Activated CD4-positive, alpha-beta T cell treated with anti-CD3 and anti-CD28 coated beads for 36 hours (primary cell): ENCODE measurements at regions of chr3 and their contacts with region 1.

Region 1: DNA sequence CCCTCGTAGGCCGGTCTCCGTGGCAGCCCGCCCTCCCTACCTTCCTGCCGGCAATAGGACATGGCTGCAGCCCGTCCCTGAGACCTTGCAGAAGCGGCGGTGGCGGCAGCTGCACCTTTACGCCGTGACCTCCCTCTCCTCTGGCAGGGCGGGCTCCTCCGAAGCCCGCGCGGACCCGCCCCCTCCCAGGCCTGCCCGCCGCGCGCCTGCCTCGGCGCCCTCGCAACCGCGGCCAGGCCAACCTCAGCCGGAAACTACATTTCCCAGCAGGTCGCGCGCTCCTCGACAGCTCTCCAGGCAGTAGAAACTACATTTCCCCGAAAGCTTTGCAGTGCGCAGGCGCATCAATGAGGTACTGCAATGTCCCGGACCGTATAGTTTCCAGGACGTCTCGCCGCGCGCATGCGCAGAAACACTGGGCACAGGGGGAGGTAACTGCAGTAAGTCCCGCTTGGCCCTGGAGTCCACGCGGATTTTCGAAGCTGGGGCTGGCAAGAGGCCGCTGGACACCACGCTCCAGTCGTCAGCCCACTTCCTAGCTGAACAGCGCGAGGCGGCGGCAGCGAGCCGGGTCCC is at the starts of genes CHCHD4 and TMEM43:
- DNase-seq: peak; percentile 99
- ATAC-seq: peak; percentile 91
- H3K4me3 Mint-ChIP-seq: peak within 1 kb of the TSS; percentile 96
- H3K27ac Mint-ChIP-seq: peak within 1 kb of the TSS; percentile 90
- H3K4me1 Mint-ChIP-seq: peaks cover 64% of the 10 kb centered on the region
- H3K27me3 Mint-ChIP-seq: no peaks in the 10 kb centered on the region
- total RNA-seq, gene CHCHD4: 23.3 TPM
- total RNA-seq, gene TMEM43: 28.3 to 28.5 TPM

Region 2: GRCh38 chr3:13012228-13012691 is 1112.4 kb before region 1 on chr3:
- CTCF ChIA-PET with region 1: no interaction called
- POLR2A ChIA-PET with region 1: no interaction called
- intact Hi-C with region 1: loop called in 1 of 2 experiments (anchors 5 kb)
- DNase-seq: peak; percentile 86
- ATAC-seq: peak; percentile 57
- H3K4me3 Mint-ChIP-seq: peak overlapping the region; percentile 72
- H3K27ac Mint-ChIP-seq: peak overlapping the region; percentile 98
- H3K4me1 Mint-ChIP-seq: peaks cover 85% of the 10 kb centered on the region
- H3K27me3 Mint-ChIP-seq: no peaks in the 10 kb centered on the region

Region 3: DNA sequence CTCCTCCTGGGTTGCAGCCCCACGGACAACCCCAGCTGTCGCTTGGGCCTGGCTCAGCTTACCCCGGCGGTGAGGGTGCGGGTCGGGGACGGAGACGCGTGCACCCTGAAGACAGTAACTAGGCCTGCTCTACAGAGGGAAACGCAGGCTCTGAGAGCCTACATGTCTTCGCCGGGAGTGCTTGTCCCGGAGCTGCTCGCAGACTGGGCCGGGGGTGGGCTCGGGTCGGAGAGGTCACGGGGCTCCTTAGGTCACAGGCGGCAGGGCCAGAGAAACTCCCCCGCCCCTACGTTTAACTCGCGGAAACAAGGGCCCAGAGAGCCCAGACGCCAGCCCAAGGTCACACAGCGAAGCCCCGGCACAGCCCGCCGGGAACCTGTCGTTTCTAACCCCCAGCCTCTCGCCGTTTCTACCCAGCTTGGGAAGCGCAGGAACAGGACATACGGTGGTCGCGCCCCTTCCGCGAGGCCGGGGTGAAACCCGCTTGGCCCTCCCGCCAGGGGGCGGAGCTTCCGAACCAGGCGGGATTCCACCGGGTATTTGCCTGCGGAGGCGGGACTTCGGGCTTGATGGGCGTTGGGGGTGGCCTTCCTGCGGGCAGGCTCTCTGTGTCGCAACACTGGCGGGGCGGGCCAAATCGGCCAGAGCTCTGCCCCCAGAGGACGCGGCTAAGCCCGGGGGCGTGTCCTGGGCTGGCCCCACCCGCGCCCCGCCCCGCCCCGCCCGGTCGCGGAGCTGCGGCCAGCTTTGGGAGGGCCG is 644.9 kb before region 1 on chr3 and contains the start of gene HDAC11:
- CTCF ChIA-PET with region 1: no interaction called
- POLR2A ChIA-PET with region 1: interaction called, 4 read pairs
- intact Hi-C with region 1: loop called in 1 of 2 experiments (anchors 5 kb)
- DNase-seq: peak; percentile 99
- ATAC-seq: peak; percentile 96
- H3K4me3 Mint-ChIP-seq: peak within 1 kb of the TSS; percentile 89
- H3K27ac Mint-ChIP-seq: peak within 1 kb of the TSS; percentile 90
- H3K4me1 Mint-ChIP-seq: peaks cover 20% of the 10 kb centered on the region
- H3K27me3 Mint-ChIP-seq: no peaks in the 10 kb centered on the region
- total RNA-seq, gene HDAC11: 3.4 to 4.1 TPM

Region 4: GRCh38 chr3:13895155-13896105 is 229.3 kb before region 1 on chr3:
- CTCF ChIA-PET with region 1: interaction called, 9 read pairs
- POLR2A ChIA-PET with region 1: interaction called, 3 read pairs
- intact Hi-C with region 1: loop called (anchors 1 kb)
- DNase-seq: peak; percentile 99
- ATAC-seq: peak; percentile 100
- H3K4me3 Mint-ChIP-seq: peak overlapping the region; percentile 83
- H3K27ac Mint-ChIP-seq: peak overlapping the region; percentile 82
- H3K4me1 Mint-ChIP-seq: peaks cover 19% of the 10 kb centered on the region
- H3K27me3 Mint-ChIP-seq: no peaks in the 10 kb centered on the region

Region 5: GRCh38 chr3:14144423-14145075 is 19.8 kb after region 1 on chr3:
- CTCF ChIA-PET with region 1: interaction called, 6 read pairs
- POLR2A ChIA-PET with region 1: interaction called, 9 read pairs
- intact Hi-C with region 1: loop called (anchors 1 kb)
- DNase-seq: peak; percentile 71
- ATAC-seq: peak; percentile 85
- H3K4me3 Mint-ChIP-seq: no peak overlapping the region
- H3K27ac Mint-ChIP-seq: peak overlapping the region; percentile 86
- H3K4me1 Mint-ChIP-seq: peaks cover 56% of the 10 kb centered on the region
- H3K27me3 Mint-ChIP-seq: no peaks in the 10 kb centered on the region

Region 6: DNA sequence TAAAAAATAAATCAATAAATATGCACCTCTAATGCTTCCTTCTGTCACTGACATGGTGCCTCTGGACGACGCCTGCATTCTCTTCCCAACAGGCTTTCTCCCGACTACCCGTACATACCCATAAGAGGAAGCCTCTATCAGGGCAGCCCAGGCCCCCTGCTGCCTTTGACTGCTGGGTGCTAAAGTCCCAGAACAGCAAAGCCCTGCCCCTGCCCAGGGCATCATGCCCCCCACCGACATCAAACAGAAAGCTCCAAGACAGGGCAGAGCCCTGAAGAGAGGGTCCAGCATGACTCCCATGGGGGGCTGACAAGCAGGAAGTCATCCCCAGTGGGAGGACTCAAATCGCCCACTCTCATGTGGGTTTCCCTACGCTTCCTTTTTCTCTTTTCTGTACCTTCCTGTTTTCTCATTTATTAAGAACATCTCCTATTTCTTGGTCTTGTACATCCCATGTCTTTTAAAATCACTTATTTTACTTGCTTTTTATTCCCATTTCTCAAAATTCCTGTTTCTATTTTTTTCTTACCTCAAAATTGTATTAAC is 30.3 kb after region 1 on chr3:
- CTCF ChIA-PET with region 1: no interaction called
- POLR2A ChIA-PET with region 1: no interaction called
- intact Hi-C with region 1: no loop called
- DNase-seq: no peak
- ATAC-seq: no peak
- H3K4me3 Mint-ChIP-seq: no peak overlapping the region
- H3K27ac Mint-ChIP-seq: no peak overlapping the region
- H3K4me1 Mint-ChIP-seq: peaks cover 4% of the 10 kb centered on the region
- H3K27me3 Mint-ChIP-seq: no peaks in the 10 kb centered on the region

Region 7: DNA sequence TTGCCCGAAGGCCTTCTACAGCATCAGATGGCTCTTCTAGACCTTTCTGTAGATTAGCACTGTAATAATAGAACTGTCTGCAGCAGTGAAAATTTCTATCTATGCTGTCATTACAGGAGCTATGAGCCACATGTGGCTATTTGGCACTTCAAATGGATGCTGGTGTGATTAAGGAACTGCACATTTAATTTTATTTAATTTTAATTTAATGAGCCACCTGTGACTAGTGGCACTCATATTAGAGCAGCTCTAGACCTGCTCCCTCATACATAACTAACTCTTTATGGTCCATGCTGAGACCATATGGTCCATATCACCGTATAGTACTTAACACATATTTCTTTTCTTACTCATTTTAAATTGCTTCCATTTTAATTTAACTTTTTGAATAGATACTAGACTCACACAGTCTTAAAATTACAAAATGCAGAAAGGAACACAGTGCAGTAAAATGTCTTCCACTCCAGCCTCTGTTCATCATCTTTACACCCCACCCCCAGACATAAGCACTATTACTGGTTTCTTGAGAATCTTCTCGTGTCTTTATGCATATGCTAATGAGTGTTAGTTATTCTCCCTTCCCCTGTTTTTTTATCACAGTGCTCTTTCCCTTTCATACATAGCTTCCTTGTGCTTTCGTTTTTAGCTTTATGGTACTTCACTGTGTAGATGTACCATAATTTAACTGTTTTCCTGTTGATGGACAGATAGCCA is 63.5 kb after region 1 on chr3:
- CTCF ChIA-PET with region 1: no interaction called
- POLR2A ChIA-PET with region 1: no interaction called
- intact Hi-C with region 1: no loop called
- DNase-seq: no peak
- ATAC-seq: peak; percentile 89
- H3K4me3 Mint-ChIP-seq: no peak overlapping the region
- H3K27ac Mint-ChIP-seq: no peak overlapping the region
- H3K4me1 Mint-ChIP-seq: peaks cover 60% of the 10 kb centered on the region
- H3K27me3 Mint-ChIP-seq: no peaks in the 10 kb centered on the region

Region 8: GRCh38 chr3:14329116-14329830 is 204.6 kb after region 1 on chr3:
- CTCF ChIA-PET with region 1: no interaction called
- POLR2A ChIA-PET with region 1: no interaction called
- intact Hi-C with region 1: no loop called
- DNase-seq: no peak
- ATAC-seq: no peak
- H3K4me3 Mint-ChIP-seq: no peak overlapping the region
- H3K27ac Mint-ChIP-seq: no peak overlapping the region
- H3K4me1 Mint-ChIP-seq: no peaks in the 10 kb centered on the region
- H3K27me3 Mint-ChIP-seq: peaks cover 5% of the 10 kb centered on the region

Region 9: DNA sequence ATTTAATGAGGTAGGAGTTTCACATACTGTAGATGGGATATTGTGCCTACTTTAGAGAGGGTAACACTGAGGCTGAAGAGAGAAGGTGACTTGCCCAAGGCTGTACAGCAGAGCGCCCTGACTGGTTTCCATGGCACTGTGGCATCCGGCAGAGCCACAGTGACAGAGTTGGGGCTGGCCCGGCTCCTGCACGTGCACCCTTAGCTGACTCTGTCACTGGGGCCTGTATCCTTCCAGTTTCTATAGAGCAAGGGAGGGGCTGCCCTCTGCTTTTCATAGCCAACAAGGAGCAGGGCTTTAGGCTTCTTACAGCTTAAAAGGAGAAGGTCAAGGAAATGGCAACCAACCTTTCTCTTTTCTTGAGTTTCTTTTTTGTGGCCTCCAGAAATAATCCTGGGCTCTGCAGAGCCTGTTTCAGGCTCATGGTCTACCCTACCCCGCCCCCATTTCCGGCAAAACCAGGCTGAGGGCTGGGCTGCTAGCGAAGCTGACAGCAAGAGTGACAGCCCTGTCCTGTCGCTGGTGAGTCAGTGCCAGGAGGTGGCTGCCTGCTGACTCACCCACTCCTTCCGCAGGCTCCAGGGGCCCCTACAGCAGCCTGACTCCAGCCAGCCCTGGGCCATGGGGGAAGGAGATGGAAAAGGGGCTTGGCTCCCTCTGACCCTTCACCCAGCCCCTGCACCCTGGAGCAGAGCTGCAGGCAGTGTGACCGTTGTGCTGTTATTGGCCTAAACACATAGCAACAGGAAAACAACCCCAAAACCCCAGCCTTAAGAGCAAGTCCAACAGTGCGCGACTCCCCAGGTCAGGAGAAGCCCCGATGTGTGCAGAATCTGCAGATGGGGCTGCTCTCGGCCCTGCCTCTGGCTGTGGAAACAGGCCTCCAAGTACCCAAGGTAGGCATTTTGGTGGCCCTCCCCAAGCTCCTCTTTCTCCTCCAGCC is 307.5 kb after region 1 on chr3:
- CTCF ChIA-PET with region 1: interaction called, 3 read pairs
- POLR2A ChIA-PET with region 1: interaction called, 3 read pairs
- intact Hi-C with region 1: loop called (anchors 1 kb)
- DNase-seq: peak; percentile 97
- ATAC-seq: peak; percentile 88
- H3K4me3 Mint-ChIP-seq: peak overlapping the region; percentile 63
- H3K27ac Mint-ChIP-seq: peak overlapping the region; percentile 96
- H3K4me1 Mint-ChIP-seq: peaks cover 86% of the 10 kb centered on the region
- H3K27me3 Mint-ChIP-seq: no peaks in the 10 kb centered on the region

Region 10: GRCh38 chr3:14947886-14948555 is 823.3 kb after region 1 on chr3:
- CTCF ChIA-PET with region 1: no interaction called
- POLR2A ChIA-PET with region 1: no interaction called
- intact Hi-C with region 1: loop called in 1 of 2 experiments (anchors 1 kb)
- DNase-seq: peak; percentile 97
- ATAC-seq: peak; percentile 97
- H3K4me3 Mint-ChIP-seq: peak overlapping the region; percentile 91
- H3K27ac Mint-ChIP-seq: peak overlapping the region; percentile 98
- H3K4me1 Mint-ChIP-seq: peaks cover 49% of the 10 kb centered on the region
- H3K27me3 Mint-ChIP-seq: no peaks in the 10 kb centered on the region

Region 11: GRCh38 chr3:15557511-15557946 is 1432.8 kb after region 1 on chr3:
- CTCF ChIA-PET with region 1: no interaction called
- POLR2A ChIA-PET with region 1: no interaction called
- intact Hi-C with region 1: no loop called
- DNase-seq: peak; percentile 75
- ATAC-seq: peak; percentile 87
- H3K4me3 Mint-ChIP-seq: no peak overlapping the region
- H3K27ac Mint-ChIP-seq: no peak overlapping the region
- H3K4me1 Mint-ChIP-seq: peaks cover 10% of the 10 kb centered on the region
- H3K27me3 Mint-ChIP-seq: no peaks in the 10 kb centered on the region